Left ventricle myocardium superior (tissue), 1 donor: ENCODE measurements at regions of chr6 and their contacts with region 1.

Region 1: GRCh38 chr6:11397622-11398450 is 139.7 kb upstream of the TMEM170B start:
- DNase-seq: no peak
- ATAC-seq: no peak

Region 2: GRCh38 chr6:11011787-11012234 is 386.0 kb before region 1 on chr6:
- intact Hi-C with region 1: no loop called
- DNase-seq: no peak
- ATAC-seq: peak; percentile 50

Region 3: DNA sequence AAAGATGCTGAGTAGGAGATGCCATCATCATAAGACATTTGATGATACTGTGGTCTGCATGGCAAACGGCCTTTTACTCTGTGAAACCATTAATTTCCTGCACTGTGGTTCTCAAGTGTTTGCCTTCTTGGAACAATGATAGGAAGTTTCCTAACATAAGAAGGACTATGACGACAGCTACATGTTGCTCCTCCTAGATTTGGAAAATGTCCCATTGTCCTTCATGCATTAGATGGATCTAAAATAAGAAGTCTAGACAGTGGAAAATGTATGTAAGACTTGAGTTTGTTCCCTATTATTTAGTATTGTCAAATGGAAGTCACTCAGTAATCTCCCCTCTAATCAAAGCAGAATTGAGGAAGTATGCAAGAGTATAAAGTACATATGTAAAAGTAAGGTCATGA is 41.2 kb after region 1 on chr6:
- intact Hi-C with region 1: loop called (anchors 2 kb)
- DNase-seq: no peak
- ATAC-seq: no peak